CD8-positive, alpha-beta T cell (primary cell): ENCODE measurements at regions of chr7 and their contacts with region 1.

Region 1: GRCh38 chr7:112789817-112790585 is at the start of gene TMEM168:
- DNase-seq: peak; percentile 71 to 91 (median 88)
- ATAC-seq: peak; percentile 91
- H3K4me3 ChIP-seq: peak within 1 kb of the TSS; percentile 94
- H3K4me3 Mint-ChIP-seq: peak within 1 kb of the TSS; percentile 89
- H3K27ac ChIP-seq: peak within 1 kb of the TSS; percentile 80 to 87
- H3K27ac Mint-ChIP-seq: peak within 1 kb of the TSS; percentile 90
- H3K4me1 ChIP-seq: peaks cover 20% of the 10 kb centered on the region
- H3K4me1 Mint-ChIP-seq: peaks cover 32% of the 10 kb centered on the region
- H3K27me3 ChIP-seq: no peaks in the 10 kb centered on the region
- H3K27me3 Mint-ChIP-seq: no peaks in the 10 kb centered on the region
- CTCF ChIP-seq: no peak
- total RNA-seq, gene TMEM168: 10.5 to 10.7 TPM

Region 2: GRCh38 chr7:112390167-112390566 is 399.8 kb before region 1 on chr7:
- CTCF ChIA-PET with region 1: no interaction called
- POLR2A ChIA-PET with region 1: no interaction called
- intact Hi-C with region 1: loop called in 1 of 2 experiments (anchors 5 kb)
- DNase-seq: no peak
- ATAC-seq: no peak
- H3K4me3 ChIP-seq: no peak overlapping the region
- H3K4me3 Mint-ChIP-seq: peak overlapping the region; percentile 6
- H3K27ac ChIP-seq: no peak overlapping the region
- H3K27ac Mint-ChIP-seq: no peak overlapping the region
- H3K4me1 ChIP-seq: peaks cover 7% of the 10 kb centered on the region
- H3K4me1 Mint-ChIP-seq: peaks cover 12% of the 10 kb centered on the region
- H3K27me3 ChIP-seq: no peaks in the 10 kb centered on the region
- H3K27me3 Mint-ChIP-seq: peaks cover 3% of the 10 kb centered on the region
- CTCF ChIP-seq: no peak

Region 3: GRCh38 chr7:112939574-112940314 is 149.7 kb after region 1 on chr7:
- CTCF ChIA-PET with region 1: no interaction called
- POLR2A ChIA-PET with region 1: no interaction called
- intact Hi-C with region 1: loop called (anchors 1 to 2 kb)
- DNase-seq: peak; percentile 98 to 100 (median 99)
- ATAC-seq: peak; percentile 94
- H3K4me3 ChIP-seq: peak overlapping the region; percentile 76 to 89
- H3K4me3 Mint-ChIP-seq: peak overlapping the region; percentile 93
- H3K27ac ChIP-seq: peak overlapping the region; percentile 75
- H3K27ac Mint-ChIP-seq: peak overlapping the region; percentile 92
- H3K4me1 ChIP-seq: peaks cover 27% of the 10 kb centered on the region
- H3K4me1 Mint-ChIP-seq: peaks cover 42% of the 10 kb centered on the region
- H3K27me3 ChIP-seq: no peaks in the 10 kb centered on the region
- H3K27me3 Mint-ChIP-seq: no peaks in the 10 kb centered on the region
- CTCF ChIP-seq: no peak

Region 4: GRCh38 chr7:113118074-113118959 is 328.3 kb after region 1 on chr7 and contains the start of gene SMIM30:
- CTCF ChIA-PET with region 1: no interaction called
- POLR2A ChIA-PET with region 1: no interaction called
- intact Hi-C with region 1: loop called (anchors 1 to 2 kb)
- DNase-seq: peak; percentile 76 to 93 (median 90)
- ATAC-seq: peak; percentile 100
- H3K4me3 ChIP-seq: peak within 1 kb of the TSS; percentile 58 to 66
- H3K4me3 Mint-ChIP-seq: peak within 1 kb of the TSS; percentile 96
- H3K27ac ChIP-seq: peak within 1 kb of the TSS; percentile 55 to 73
- H3K27ac Mint-ChIP-seq: peak within 1 kb of the TSS; percentile 98
- H3K4me1 ChIP-seq: peaks cover 6% of the 10 kb centered on the region
- H3K4me1 Mint-ChIP-seq: peaks cover 21% of the 10 kb centered on the region
- H3K27me3 ChIP-seq: no peaks in the 10 kb centered on the region
- H3K27me3 Mint-ChIP-seq: no peaks in the 10 kb centered on the region
- CTCF ChIP-seq: no peak
- total RNA-seq, gene SMIM30: 3.5 to 4.8 TPM